ENCODE measurements at regions of chr19 and their contacts with region 1.

Region 1: DNA sequence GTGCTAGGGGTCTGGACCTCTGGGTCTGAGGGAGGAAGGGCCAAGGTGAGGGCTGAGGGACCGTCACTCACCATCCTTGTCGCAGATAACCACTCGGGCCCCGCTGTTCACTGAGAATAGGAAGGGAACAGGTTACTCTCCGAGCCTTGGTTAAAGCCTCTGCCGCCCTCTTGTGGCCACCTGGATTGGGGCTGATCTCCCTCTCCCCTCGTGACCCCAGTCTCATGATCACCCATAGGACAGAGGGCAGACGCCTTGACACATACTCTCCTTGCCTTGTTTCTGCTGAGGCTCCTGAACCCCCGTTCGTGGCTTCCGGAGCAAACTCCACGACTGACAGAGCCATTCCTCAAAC is 580 bp downstream of the HSD17B14 start:
- DNase-seq: peak; percentile 87 to 96 (median 92)
- ATAC-seq: peak; percentile 86
- H3K4me3 ChIP-seq: peak overlapping the region; percentile 42 to 51
- H3K4me3 Mint-ChIP-seq: peak overlapping the region; percentile 83
- H3K27ac ChIP-seq: no peak overlapping the region
- H3K27ac Mint-ChIP-seq: peak overlapping the region; percentile 50
- H3K4me1 ChIP-seq: peaks cover 22% of the 10 kb centered on the region
- H3K4me1 Mint-ChIP-seq: peaks cover 20% of the 10 kb centered on the region
- H3K27me3 ChIP-seq: peaks cover 0 to 5% of the 10 kb centered on the region in 2 experiments
- H3K27me3 Mint-ChIP-seq: peaks cover 5% of the 10 kb centered on the region
- CTCF ChIP-seq: peak; percentile 66

Region 2: DNA sequence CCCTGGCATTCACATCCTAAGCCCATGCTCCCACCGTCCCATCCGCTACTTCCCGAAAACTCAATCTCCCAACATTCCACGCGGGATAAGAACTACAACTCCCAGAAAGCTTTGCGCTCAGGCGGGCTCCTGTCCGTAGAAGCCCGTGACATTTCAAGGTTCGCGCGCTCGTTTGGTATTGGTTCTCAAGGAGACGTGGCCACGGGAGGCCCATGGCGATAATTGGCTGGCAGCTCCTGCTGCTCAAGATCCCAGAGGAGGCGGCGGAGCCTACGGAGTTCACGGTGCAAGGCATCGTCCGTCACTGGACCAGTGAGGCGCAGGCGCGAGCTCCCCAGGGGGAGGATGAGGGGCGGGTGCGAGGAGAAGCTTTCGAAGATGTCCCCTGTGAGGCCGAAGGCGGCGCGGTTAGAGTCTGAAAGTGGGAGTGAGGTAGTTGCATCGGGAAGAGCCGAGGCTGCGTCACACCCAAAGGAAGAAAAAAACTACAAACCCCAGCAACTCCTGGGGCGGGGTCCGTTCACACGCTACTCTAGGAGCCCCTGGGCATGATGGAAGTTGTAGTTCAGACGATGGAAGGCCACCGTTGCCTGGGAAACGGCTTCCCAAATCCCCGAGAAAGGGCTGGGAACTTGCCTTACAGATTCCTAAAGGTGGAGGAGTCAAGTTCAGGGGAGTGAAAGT is 115.0 kb before region 1 on chr19:
- CTCF ChIA-PET with region 1: no interaction called
- POLR2A ChIA-PET with region 1: no interaction called
- intact Hi-C with region 1: loop called in 1 of 2 experiments (anchors 5 kb)
- DNase-seq: peak; percentile 81 to 96 (median 90)
- ATAC-seq: peak; percentile 80
- H3K4me3 ChIP-seq: peak overlapping the region; percentile 65 to 69
- H3K4me3 Mint-ChIP-seq: peak overlapping the region; percentile 96
- H3K27ac ChIP-seq: peak overlapping the region; percentile 52 to 88
- H3K27ac Mint-ChIP-seq: peak overlapping the region; percentile 96
- H3K4me1 ChIP-seq: peaks cover 16% of the 10 kb centered on the region
- H3K4me1 Mint-ChIP-seq: peaks cover 24% of the 10 kb centered on the region
- H3K27me3 ChIP-seq: no peaks in the 10 kb centered on the region
- H3K27me3 Mint-ChIP-seq: no peaks in the 10 kb centered on the region
- CTCF ChIP-seq: no peak

Region 3: GRCh38 chr19:48784540-48784939 is 51.2 kb before region 1 on chr19:
- CTCF ChIA-PET with region 1: interaction called, 403 read pairs
- POLR2A ChIA-PET with region 1: no interaction called
- intact Hi-C with region 1: loop called in 1 of 2 experiments (anchors 1 kb)
- DNase-seq: no peak
- ATAC-seq: no peak
- H3K4me3 ChIP-seq: no peak overlapping the region
- H3K4me3 Mint-ChIP-seq: no peak overlapping the region
- H3K27ac ChIP-seq: no peak overlapping the region
- H3K27ac Mint-ChIP-seq: no peak overlapping the region
- H3K4me1 ChIP-seq: peaks cover 3% of the 10 kb centered on the region
- H3K4me1 Mint-ChIP-seq: peaks cover 6% of the 10 kb centered on the region
- H3K27me3 ChIP-seq: no peaks in the 10 kb centered on the region
- H3K27me3 Mint-ChIP-seq: peaks cover 12% of the 10 kb centered on the region
- CTCF ChIP-seq: no peak

Region 4: DNA sequence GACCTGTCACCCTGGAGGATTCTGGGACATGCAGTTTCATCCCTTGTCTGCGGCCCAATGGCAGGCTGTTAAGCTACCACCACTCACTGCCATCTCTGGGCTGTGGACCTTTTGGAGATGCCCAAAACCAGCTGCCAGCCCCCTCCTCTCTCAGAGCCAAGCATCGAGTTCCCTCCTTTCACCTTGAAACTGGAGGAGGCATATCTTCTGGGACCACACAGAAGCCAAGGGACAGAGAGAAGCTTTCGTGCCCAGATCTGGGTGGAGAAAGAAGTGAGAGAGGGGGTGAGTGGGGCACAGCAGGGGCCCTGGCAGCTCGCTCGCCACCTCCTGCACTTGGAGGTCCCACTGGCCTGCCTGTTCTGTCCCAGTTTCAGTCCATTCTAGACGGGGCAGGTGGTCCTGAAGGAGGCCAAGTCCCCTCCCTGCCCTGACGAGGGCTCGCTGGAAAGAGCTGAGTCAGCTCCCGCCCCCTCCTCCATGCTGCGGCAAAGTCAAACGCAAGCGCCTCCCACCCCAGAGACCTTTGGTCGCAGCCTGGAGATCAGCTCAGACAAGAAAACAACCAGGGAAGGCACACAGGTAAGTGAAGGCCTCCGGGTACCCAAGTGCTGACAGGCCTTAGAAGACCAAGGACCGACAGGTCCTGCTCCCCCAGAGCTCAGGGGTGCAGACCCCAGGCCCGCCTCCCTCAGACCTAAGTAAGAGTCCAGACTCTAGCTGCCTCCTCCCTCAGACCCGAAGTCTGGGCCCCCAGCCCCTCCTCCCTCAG is 28.7 kb before region 1 on chr19:
- CTCF ChIA-PET with region 1: interaction called, 10 read pairs
- POLR2A ChIA-PET with region 1: no interaction called
- intact Hi-C with region 1: no loop called
- DNase-seq: no peak
- ATAC-seq: no peak
- H3K4me3 ChIP-seq: no peak overlapping the region
- H3K4me3 Mint-ChIP-seq: no peak overlapping the region
- H3K27ac ChIP-seq: no peak overlapping the region
- H3K27ac Mint-ChIP-seq: no peak overlapping the region
- H3K4me1 ChIP-seq: peaks cover 11% of the 10 kb centered on the region
- H3K4me1 Mint-ChIP-seq: peaks cover 19% of the 10 kb centered on the region
- H3K27me3 ChIP-seq: no peaks in the 10 kb centered on the region
- H3K27me3 Mint-ChIP-seq: no peaks in the 10 kb centered on the region
- CTCF ChIP-seq: no peak

Region 5: GRCh38 chr19:48970923-48971395 is 135.2 kb after region 1 on chr19:
- CTCF ChIA-PET with region 1: interaction called, 61 read pairs
- POLR2A ChIA-PET with region 1: interaction called, 3 read pairs
- intact Hi-C with region 1: loop called (anchors 1 to 2 kb)
- DNase-seq: peak; percentile 67 to 91 (median 86)
- ATAC-seq: peak; percentile 91
- H3K4me3 ChIP-seq: no peak overlapping the region
- H3K4me3 Mint-ChIP-seq: no peak overlapping the region
- H3K27ac ChIP-seq: no peak overlapping the region
- H3K27ac Mint-ChIP-seq: no peak overlapping the region
- H3K4me1 ChIP-seq: peaks cover 10% of the 10 kb centered on the region
- H3K4me1 Mint-ChIP-seq: peaks cover 19% of the 10 kb centered on the region
- H3K27me3 ChIP-seq: no peaks in the 10 kb centered on the region
- H3K27me3 Mint-ChIP-seq: no peaks in the 10 kb centered on the region
- CTCF ChIP-seq: peak; percentile 84

Region 6: DNA sequence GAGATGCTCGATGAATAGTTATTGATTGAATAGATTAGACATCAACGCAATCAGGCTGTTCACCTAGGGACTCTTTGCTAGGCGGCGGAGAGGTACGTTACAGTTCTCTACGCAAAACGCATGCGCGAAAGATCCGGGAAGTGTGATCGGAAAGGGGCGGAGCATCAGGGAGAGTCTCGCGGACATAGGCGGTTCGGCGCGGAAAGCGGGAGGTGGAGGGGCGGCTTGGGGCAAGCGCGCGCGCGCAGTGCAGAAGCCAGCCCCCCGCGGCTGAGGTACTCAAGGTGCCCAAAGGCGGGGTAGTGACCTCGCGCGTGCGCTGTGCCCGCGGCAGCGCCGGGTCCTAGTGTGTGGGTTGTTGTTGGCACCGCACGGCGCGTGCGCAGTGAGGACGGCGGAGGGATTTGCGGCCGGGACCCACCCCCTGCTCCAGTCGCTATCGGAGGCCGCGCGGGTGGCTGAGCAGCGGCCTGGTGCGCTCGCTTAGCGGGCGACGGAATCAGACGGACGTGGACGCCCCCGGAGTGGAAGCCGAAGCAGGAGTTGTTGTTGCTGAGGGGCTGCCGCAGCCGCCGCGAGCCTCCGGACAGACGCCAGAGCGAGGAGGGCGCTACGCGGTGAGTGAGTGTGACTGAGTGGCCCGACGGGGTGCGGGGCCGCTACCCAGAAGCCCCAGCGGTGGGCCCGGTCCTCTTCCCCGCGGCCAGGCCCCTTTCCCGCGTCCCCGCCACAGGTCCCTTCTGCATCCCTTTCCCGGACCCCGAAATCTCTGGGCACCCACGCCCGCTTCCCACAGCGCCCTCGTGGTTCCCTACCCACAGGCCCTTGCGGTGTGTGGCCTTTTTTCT is 249.5 kb after region 1 on chr19 and contains the start of gene SNRNP70:
- CTCF ChIA-PET with region 1: no interaction called
- POLR2A ChIA-PET with region 1: no interaction called
- intact Hi-C with region 1: loop called in 1 of 2 experiments (anchors 2 kb)
- DNase-seq: peak; percentile 97 to 100 (median 99)
- ATAC-seq: peak; percentile 97
- H3K4me3 ChIP-seq: peak within 1 kb of the TSS; percentile 85 to 91
- H3K4me3 Mint-ChIP-seq: peak within 1 kb of the TSS; percentile 96
- H3K27ac ChIP-seq: peak within 1 kb of the TSS; percentile 74 to 90
- H3K27ac Mint-ChIP-seq: peak within 1 kb of the TSS; percentile 96
- H3K4me1 ChIP-seq: peaks cover 33% of the 10 kb centered on the region
- H3K4me1 Mint-ChIP-seq: peaks cover 33% of the 10 kb centered on the region
- H3K27me3 ChIP-seq: no peaks in the 10 kb centered on the region
- H3K27me3 Mint-ChIP-seq: peaks cover 4% of the 10 kb centered on the region
- CTCF ChIP-seq: no peak
- total RNA-seq, gene SNRNP70: 341 to 350 TPM

Measured in CD8-positive, alpha-beta T cell (primary cell).